CD4-positive, alpha-beta T cell (primary cell): ENCODE measurements at regions of chr3 and their contacts with region 1.

Region 1: GRCh38 chr3:150925751-150926201 is 20.5 kb upstream of the MINDY4B start:
- DNase-seq: peak; percentile 13 to 59 (median 34)
- ATAC-seq: peak; percentile 65
- H3K4me3 ChIP-seq: peak overlapping the region; percentile 29
- H3K4me3 Mint-ChIP-seq: peak overlapping the region; percentile 9
- H3K27ac ChIP-seq: no peak overlapping the region
- H3K27ac Mint-ChIP-seq: no peak overlapping the region
- H3K4me1 ChIP-seq: peaks cover 8% of the 10 kb centered on the region
- H3K4me1 Mint-ChIP-seq: peaks cover 8% of the 10 kb centered on the region
- H3K27me3 ChIP-seq: peaks cover 0 to 7% of the 10 kb centered on the region in 2 experiments
- H3K27me3 Mint-ChIP-seq: peaks cover 12% of the 10 kb centered on the region
- CTCF ChIP-seq: peak; percentile 66

Region 2: DNA sequence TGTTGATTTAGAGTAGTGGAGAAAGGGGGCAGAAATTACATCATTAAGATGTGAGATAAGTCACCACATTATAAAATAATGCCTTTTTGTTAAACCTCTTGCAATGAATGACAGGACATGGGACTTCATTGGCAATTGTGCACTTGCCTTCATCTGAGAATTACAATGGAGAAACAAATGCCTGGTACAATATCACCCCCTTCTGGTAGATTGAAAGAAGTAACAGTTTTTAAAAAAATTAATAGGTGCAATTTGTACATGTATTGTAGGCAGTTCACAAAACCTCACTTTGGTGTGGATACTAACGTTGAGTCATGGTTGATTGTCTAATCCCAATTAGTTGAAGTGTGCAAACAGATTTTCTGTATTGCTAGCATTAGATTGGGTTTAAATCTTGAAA is 357.1 kb after region 1 on chr3:
- CTCF ChIA-PET with region 1: no interaction called
- POLR2A ChIA-PET with region 1: no interaction called
- intact Hi-C with region 1: loop called in 1 of 2 experiments (anchors 10 kb)
- DNase-seq: peak in 3 of 14 experiments; percentile 72 to 79 (median 78)
- ATAC-seq: peak; percentile 68
- H3K4me3 ChIP-seq: no peak overlapping the region
- H3K4me3 Mint-ChIP-seq: no peak overlapping the region
- H3K27ac ChIP-seq: no peak overlapping the region
- H3K27ac Mint-ChIP-seq: no peak overlapping the region
- H3K4me1 ChIP-seq: peaks cover 11% of the 10 kb centered on the region
- H3K4me1 Mint-ChIP-seq: peaks cover 27% of the 10 kb centered on the region
- H3K27me3 ChIP-seq: no peaks in the 10 kb centered on the region
- H3K27me3 Mint-ChIP-seq: no peaks in the 10 kb centered on the region
- CTCF ChIP-seq: peak; percentile 83